MCF 10A (cell line): ENCODE measurements at regions of chr1 and their contacts with region 1.

Region 1: DNA sequence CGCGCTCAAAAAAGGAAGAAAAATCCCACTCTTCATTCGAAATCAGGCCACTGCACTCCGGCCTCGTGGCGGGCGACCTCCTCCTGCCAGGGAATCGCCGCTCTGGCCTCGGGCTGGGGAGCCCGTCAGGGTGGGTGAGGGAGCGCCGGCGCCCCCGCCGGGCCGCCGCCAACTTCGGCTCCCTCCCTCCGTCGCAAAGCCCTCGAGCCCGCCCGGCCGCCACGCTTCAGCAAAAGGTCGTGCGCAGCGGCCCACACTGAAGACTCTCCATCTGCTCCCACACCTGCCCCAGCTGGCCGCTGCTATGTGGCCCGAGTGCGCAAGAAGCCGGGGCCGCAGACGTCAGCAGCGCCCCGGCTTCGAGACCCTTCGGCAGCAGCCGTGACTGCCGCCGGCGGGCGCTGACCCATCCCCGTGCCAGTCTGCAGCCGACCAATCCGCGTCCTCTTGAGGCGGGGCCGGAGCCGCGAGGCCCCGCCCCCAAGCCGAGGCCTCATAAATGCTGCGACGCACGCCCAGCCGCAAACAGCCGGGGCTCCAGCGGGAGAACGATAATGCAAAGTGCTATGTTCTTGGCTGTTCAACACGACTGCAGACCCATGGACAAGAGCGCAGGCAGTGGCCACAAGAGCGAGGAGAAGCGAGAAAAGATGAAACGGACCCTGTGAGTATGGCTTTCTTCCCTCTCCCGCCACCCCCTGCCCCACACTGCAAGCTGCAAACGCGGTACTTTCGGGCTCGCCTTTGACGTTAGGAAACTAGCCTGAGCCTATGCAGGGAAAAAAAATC is at the start of gene RGS2:
- DNase-seq: peak; percentile 95
- H3K4me3 Mint-ChIP-seq: peak within 1 kb of the TSS; percentile 97
- H3K27ac Mint-ChIP-seq: peak within 1 kb of the TSS; percentile 90
- H3K4me1 Mint-ChIP-seq: peaks cover 28% of the 10 kb centered on the region
- H3K27me3 Mint-ChIP-seq: no peaks in the 10 kb centered on the region
- CTCF ChIP-seq: no peak
- total RNA-seq, gene RGS2: 31.5 and 42.6 TPM in 2 replicates

Region 2: GRCh38 chr1:192826791-192827477 is 18.2 kb after region 1 on chr1:
- CTCF ChIA-PET with region 1: interaction called, 4 read pairs
- POLR2A ChIA-PET with region 1: interaction called, 23 read pairs
- intact Hi-C with region 1: no loop called
- DNase-seq: peak; percentile 30
- H3K4me3 Mint-ChIP-seq: no peak overlapping the region
- H3K27ac Mint-ChIP-seq: no peak overlapping the region
- H3K4me1 Mint-ChIP-seq: peaks cover 13% of the 10 kb centered on the region
- H3K27me3 Mint-ChIP-seq: no peaks in the 10 kb centered on the region
- CTCF ChIP-seq: no peak

Region 3: DNA sequence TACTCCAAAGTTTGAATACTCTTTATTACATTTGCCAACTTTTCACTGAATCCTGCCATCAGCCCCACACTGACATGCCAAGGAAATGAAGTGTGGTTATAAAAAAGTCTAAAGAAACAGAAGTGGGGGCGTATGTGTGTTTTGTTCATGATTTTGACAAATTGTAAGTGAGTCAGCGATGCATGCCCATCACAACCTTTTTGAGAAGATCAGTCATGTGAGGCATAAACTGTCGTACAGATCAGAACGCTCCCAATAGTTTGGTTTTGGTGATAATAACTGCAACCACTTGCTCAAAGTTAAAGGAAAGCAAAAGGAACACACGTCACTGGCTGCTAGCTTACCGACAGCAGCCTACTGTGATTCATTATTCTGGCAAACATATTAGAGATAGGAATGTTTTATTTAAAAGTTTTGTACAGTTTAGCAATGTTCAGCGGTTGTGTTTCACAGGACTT is 95.8 kb after region 1 on chr1:
- CTCF ChIA-PET with region 1: interaction called, 96 read pairs
- POLR2A ChIA-PET with region 1: interaction called, 421 read pairs
- intact Hi-C with region 1: loop called (anchors 1 kb)
- DNase-seq: peak; percentile 96
- H3K4me3 Mint-ChIP-seq: peak overlapping the region; percentile 33
- H3K27ac Mint-ChIP-seq: peak overlapping the region; percentile 92
- H3K4me1 Mint-ChIP-seq: peaks cover 66% of the 10 kb centered on the region
- H3K27me3 Mint-ChIP-seq: no peaks in the 10 kb centered on the region
- CTCF ChIP-seq: no peak

Region 4: DNA sequence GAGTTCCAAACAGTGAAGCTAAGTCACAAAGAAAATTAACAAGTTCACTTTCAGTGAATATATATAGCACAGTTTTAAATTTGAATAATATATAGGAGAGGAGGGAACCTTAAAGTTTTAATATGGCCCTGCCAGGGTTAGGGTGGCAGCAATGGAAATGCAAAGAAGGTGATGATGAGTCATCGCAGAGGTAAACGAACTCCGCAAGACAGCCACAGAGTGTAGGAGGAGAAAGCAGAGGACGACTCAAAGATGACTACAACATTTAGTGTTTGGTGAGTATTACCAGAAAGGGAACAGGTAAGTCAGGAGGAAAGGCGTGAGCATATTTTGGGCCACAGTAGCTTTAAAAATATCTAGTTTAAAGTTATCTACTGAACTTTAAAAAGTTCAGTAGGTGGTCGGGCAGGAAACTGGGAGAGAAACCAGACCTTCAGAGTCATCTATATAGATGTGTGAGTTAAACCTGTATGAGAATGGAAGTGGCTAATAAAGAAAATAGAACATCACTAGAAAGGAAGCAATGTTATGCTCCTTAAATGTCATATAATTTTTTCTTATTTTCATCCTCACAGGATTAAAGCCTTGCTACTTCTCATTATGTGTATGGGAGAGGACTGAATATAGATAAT is 174.8 kb after region 1 on chr1:
- CTCF ChIA-PET with region 1: interaction called, 13 read pairs
- POLR2A ChIA-PET with region 1: interaction called, 6 read pairs
- intact Hi-C with region 1: no loop called
- DNase-seq: peak; percentile 70
- H3K4me3 Mint-ChIP-seq: no peak overlapping the region
- H3K27ac Mint-ChIP-seq: peak overlapping the region; percentile 24
- H3K4me1 Mint-ChIP-seq: peaks cover 12% of the 10 kb centered on the region
- H3K27me3 Mint-ChIP-seq: no peaks in the 10 kb centered on the region
- CTCF ChIP-seq: no peak

Region 5: DNA sequence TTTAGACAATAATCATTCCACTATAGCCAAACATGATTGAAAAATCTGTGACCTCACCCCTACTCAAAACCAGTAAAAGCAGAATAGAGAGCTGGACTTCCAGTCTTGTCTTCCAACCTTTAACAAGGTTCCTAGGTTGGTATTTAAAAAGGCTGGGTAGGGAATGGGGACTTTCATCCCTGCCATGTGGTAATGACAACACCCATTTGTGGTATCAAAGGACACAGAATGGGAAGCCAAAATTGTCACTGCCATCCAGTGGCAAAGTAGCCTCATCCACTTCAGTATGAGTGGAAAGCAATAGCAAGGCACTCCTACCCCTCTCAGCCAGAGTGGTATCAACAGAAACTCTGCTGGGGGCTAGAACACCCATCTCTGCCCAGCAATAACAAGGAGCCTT is 216.5 kb after region 1 on chr1:
- CTCF ChIA-PET with region 1: interaction called, 226 read pairs
- POLR2A ChIA-PET with region 1: interaction called, 204 read pairs
- intact Hi-C with region 1: no loop called
- DNase-seq: no peak
- H3K4me3 Mint-ChIP-seq: no peak overlapping the region
- H3K27ac Mint-ChIP-seq: peak overlapping the region; percentile 27
- H3K4me1 Mint-ChIP-seq: no peaks in the 10 kb centered on the region
- H3K27me3 Mint-ChIP-seq: no peaks in the 10 kb centered on the region
- CTCF ChIP-seq: no peak